Activated T-helper 2 cell treated with anti-CD3 and anti-CD28 coated beads, Interferon-gamma antibody, Interleukin-2, Interleukin-4, amounts not matched to agents 10 μg/mL and 5 μg/mL and 100 μg/mL, durations not matched to agents 14 hours and 24 hours and 36 hours (primary cell): ENCODE measurements at regions of chr3 and their contacts with region 1.

Region 1: GRCh38 chr3:16600780-16601539 is 4.3 kb downstream of the DAZL start:
- DNase-seq: peak; percentile 50
- H3K4me3 Mint-ChIP-seq: no peak overlapping the region
- H3K27ac Mint-ChIP-seq: no peak overlapping the region
- H3K4me1 Mint-ChIP-seq: peaks cover 26% of the 10 kb centered on the region
- H3K27me3 Mint-ChIP-seq: peaks cover 47% of the 10 kb centered on the region

Region 2: DNA sequence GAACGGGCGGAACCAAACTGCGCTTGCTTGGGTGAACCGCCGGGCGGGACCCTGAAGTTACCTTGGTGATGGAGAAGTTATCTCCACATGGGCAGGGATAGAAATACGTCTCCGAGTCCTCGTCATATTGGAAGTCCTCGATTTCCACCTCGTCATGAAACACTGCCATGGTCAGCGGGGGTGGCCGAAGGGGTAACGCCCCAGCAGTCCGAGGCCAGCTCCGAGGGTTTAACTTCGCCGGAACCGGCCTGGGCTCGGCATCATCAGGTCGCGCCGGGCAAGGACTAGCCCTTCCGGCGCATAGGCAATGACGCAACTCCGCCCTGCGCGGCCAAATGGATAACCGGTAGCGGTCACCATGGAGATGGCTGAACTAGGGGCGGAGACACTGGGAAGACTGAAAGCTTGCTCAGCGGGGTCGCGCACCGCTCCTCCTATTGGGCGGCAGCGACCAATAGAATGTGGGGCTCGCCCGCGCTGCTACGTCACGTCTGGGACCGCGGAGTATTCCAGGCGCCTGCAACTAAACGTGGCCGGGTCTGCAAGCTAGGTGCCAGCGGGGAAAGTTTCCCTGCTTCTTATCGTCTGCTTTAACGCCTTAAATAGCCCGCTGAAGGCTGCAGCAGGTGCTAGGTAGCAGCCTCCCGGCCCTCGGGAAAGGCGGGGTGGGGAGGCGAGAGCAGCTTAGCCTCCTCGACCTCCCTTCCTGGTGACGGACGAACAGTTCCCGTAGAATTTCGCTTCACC is 336.1 kb before region 1 on chr3 and contains the starts of genes DPH3 and OXNAD1:
- intact Hi-C with region 1: loop called (anchors 2 kb)
- DNase-seq: peak; percentile 99
- H3K4me3 Mint-ChIP-seq: peak within 1 kb of the TSS; percentile 96
- H3K27ac Mint-ChIP-seq: peak within 1 kb of the TSS; percentile 95
- H3K4me1 Mint-ChIP-seq: peaks cover 20% of the 10 kb centered on the region
- H3K27me3 Mint-ChIP-seq: no peaks in the 10 kb centered on the region
- total RNA-seq, gene DPH3: 22.7 and 23.1 TPM in 2 replicates
- total RNA-seq, gene OXNAD1: 18.7 and 20.5 TPM in 2 replicates

Region 3: GRCh38 chr3:16309558-16309957 is 291.4 kb before region 1 on chr3:
- intact Hi-C with region 1: loop called (anchors 5 kb)
- DNase-seq: peak; percentile 56
- H3K4me3 Mint-ChIP-seq: peak overlapping the region; percentile 60
- H3K27ac Mint-ChIP-seq: peak overlapping the region; percentile 91
- H3K4me1 Mint-ChIP-seq: peaks cover 80% of the 10 kb centered on the region
- H3K27me3 Mint-ChIP-seq: no peaks in the 10 kb centered on the region

Region 4: DNA sequence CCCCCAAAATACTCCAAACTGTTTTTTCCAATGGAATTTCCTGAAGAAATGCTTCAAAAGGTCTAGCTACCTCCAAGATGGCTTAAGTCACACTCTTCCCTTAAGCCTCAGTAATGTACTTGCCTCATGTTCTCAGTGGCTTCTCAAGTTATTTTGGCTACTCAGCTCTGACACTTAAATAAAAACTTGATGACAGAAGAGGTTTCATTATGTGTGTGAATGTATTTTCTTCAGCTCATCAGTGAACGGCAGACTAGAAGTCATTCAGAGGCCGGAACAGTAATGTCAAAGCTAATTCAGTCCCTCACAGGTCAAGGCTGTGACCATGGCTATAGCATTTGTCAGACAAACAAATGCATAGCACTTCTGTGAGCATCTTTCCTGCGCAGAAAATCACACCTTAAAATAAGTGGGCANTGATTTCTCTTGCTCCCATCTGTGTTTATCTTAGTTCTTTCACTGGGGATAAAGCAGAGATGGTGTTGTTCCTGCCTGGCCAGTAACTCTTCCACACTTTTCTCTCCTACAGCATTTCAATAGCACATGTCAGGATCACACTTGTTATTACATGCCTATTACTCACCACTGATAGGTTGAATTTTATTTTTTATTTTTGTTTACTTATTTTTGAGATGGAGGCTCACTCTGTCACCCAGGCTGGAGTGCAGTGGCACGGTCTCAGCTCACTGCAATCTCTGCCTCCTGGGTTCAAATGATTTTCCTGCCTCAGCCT is 215.3 kb after region 1 on chr3:
- intact Hi-C with region 1: no loop called
- DNase-seq: no peak
- H3K4me3 Mint-ChIP-seq: no peak overlapping the region
- H3K27ac Mint-ChIP-seq: no peak overlapping the region
- H3K4me1 Mint-ChIP-seq: peaks cover 9% of the 10 kb centered on the region
- H3K27me3 Mint-ChIP-seq: peaks cover 26% of the 10 kb centered on the region

Region 5: DNA sequence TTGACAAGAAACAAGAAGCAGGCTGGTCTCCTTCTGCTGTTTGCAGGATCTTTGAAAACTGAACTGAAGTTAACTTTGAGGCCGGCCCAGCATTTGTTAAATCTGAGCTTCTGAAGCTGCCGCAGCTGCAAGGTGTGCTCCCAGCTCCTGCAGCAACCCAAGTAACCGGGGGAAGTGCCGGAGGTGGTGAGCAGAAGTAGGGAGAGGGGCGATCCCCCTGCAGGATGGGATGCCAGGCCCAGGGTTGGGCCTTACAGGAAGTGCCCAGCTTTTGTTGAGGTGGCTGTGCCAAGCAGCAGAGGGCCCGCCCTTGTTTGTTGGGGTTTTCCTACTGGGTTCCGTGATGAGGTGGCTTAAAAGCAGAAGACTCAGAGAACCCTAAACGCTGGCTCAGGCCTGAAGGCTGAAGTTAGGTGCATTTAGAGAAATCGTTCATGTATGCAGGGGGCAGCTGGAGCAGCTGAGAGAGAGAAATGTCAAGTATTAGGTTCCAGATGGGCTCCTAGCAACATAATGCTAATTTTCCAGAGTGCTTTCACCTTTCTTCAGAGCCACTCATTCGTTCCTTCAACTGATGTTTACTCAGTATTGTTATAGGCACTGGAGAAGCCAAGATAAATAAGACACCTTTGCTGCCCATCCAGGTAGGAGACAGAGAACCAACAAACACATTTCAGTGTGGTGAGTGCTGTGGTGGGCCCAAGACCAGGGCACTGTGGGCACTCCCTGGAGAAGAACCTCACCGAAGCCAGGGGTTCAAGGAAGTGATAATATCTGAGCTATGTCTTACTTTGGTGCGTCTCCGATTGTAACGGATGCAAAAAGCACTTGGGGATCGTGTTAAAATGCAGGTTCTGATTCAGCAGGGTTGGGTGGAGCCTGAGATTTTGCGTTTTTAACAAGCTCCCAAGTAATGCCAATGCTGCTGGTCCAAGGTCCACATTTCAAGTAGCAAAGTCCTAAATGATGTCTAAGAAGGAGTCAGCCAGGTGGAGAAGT is 241.6 kb after region 1 on chr3:
- intact Hi-C with region 1: loop called (anchors 5 kb)
- DNase-seq: peak; percentile 71
- H3K4me3 Mint-ChIP-seq: peak overlapping the region; percentile 75
- H3K27ac Mint-ChIP-seq: peak overlapping the region; percentile 94
- H3K4me1 Mint-ChIP-seq: peaks cover 60% of the 10 kb centered on the region
- H3K27me3 Mint-ChIP-seq: peaks cover 4% of the 10 kb centered on the region

Region 6: DNA sequence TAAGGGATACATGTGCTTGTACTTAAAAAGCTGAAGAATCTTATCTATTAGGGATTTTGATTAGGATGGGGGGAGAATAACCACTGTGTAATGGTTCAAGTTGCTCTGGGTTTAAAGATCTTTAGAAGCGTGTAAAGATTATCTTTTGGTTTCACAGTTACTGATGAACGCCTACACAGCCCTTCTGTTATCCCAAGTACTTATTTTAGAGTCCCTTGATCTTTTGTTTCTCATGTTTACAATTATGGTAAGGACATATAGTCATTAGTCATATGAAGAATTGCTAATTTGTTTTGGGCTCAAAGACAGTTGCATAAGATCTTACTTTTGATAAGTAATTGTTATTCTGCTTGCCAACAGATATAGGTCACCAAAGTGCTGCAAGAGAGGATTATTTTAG is 443.9 kb after region 1 on chr3:
- intact Hi-C with region 1: loop called (anchors 2 kb)
- DNase-seq: no peak
- H3K4me3 Mint-ChIP-seq: no peak overlapping the region
- H3K27ac Mint-ChIP-seq: peak overlapping the region; percentile 20
- H3K4me1 Mint-ChIP-seq: peaks cover 54% of the 10 kb centered on the region
- H3K27me3 Mint-ChIP-seq: no peaks in the 10 kb centered on the region

Region 7: DNA sequence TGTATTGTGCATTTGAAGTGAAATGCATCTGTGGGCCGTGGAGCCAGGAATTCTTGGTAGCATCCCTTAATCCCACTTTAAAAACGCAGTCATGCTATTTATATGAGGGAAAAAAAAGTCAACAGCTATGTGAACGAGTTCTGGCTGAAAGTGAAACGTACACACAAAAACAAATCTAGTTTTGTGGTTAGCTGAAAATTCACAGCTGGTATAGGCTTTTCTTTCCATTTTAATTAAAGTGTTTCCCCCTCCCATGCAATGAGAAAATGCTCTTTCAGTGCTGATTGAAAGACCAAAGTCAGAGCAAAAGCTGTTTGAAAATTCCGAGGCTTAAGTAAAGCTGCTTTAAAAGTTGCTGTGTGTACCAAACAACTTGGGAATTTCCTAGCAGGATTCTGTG is 581.2 kb after region 1 on chr3:
- intact Hi-C with region 1: loop called (anchors 2 kb)
- DNase-seq: no peak
- H3K4me3 Mint-ChIP-seq: peak overlapping the region; percentile 54
- H3K27ac Mint-ChIP-seq: peak overlapping the region; percentile 38
- H3K4me1 Mint-ChIP-seq: peaks cover 30% of the 10 kb centered on the region
- H3K27me3 Mint-ChIP-seq: no peaks in the 10 kb centered on the region

Region 8: GRCh38 chr3:17412950-17413530 is 812.1 kb after region 1 on chr3:
- intact Hi-C with region 1: loop called (anchors 1 kb)
- DNase-seq: no peak
- H3K4me3 Mint-ChIP-seq: no peak overlapping the region
- H3K27ac Mint-ChIP-seq: no peak overlapping the region
- H3K4me1 Mint-ChIP-seq: no peaks in the 10 kb centered on the region
- H3K27me3 Mint-ChIP-seq: no peaks in the 10 kb centered on the region